ENCODE measurements at regions of chr15 and their contacts with region 1.

Region 1: DNA sequence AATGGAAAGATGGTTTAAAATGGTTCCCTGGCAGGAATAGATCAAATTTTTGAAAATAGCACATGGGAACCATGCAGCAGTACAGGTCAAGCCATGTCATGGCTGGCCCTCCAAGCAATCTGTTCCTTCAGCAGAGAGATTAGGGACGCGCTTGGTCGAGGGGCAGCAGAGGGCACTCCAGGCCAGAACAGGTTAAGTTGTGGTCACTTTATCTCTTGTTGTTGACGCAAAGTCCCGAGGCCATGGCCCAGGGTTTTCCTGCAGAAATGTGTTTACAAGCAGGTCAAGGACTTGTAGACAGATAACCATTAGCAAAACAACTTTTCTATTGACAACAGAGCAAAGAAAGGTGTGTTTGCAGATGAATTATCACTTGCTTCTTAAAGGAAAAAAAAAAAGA is 570.0 kb upstream of the NR2F2 start:
- DNase-seq: peak in 1 of 2 experiments; percentile 9
- H3K4me3 ChIP-seq: no peak overlapping the region
- H3K27ac ChIP-seq: no peak overlapping the region
- H3K4me1 ChIP-seq: no peaks in the 10 kb centered on the region
- H3K27me3 ChIP-seq: no peaks in the 10 kb centered on the region
- CTCF ChIP-seq: no peak

Region 2: DNA sequence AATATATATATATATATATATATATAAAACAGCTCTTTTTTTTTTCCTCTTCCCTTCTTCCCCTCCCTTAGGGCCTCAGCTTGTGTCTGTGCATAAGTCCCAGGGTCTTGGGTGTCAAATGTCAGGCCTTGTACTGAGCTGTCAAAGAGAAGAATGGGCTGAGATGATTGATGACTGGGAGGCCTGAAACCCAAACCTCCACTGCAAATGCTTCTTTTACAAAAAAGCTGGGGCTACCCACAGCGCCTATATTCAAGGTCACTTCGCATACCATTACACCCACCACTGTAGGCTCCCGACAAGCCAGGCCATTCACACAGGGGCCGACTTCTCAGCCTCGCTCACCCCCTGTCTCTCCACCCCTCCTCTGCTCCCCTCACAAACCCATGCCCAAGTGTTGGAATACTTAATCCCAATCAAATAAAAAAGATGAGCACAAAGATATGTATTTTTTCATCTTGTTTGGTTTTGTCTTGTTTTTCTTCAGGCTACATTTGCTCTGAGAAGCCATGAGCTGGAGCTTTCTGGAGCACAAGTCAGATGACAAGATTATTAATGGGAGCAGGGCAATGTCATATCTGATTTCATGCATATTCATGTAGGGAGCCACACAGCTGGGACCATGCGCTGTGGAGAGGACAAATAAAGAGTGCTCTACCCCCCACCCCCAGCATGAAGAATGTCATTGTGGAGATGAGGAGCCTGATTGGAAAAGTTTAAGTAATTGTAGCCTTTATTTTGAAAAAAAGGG is 44.4 kb before region 1 on chr15:
- CTCF ChIA-PET with region 1: no interaction called
- POLR2A ChIA-PET with region 1: no interaction called
- intact Hi-C with region 1: loop called (anchors 10 kb)
- DNase-seq: peak in 1 of 2 experiments; percentile 9
- H3K4me3 ChIP-seq: no peak overlapping the region
- H3K27ac ChIP-seq: no peak overlapping the region
- H3K4me1 ChIP-seq: no peaks in the 10 kb centered on the region
- H3K27me3 ChIP-seq: no peaks in the 10 kb centered on the region
- CTCF ChIP-seq: no peak

Region 3: DNA sequence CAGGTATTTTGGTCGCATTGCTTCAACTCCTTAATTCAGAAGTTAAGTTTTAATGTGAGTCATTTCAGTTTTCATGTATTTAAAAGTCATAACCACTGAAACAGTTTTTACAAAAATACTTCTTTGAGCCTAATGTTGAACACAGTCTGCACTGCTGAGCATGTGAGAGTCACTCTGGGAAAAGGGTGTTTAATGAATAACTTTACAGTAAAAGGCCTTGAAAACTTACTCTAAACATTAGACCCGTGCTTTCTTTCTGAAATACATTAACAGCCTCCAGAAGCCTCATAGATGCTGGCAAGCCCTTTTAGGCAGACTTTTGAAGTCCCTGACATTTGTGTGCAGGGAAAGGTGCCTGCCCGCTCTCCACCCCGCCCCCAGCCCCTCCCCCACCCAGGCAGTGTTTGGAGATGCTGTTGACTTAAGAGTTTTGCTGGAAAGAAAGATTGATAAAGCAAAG is 501.1 kb after region 1 on chr15:
- CTCF ChIA-PET with region 1: no interaction called
- POLR2A ChIA-PET with region 1: no interaction called
- intact Hi-C with region 1: no loop called
- DNase-seq: no peak
- H3K4me3 ChIP-seq: no peak overlapping the region
- H3K27ac ChIP-seq: no peak overlapping the region
- H3K4me1 ChIP-seq: peaks cover 33% of the 10 kb centered on the region
- H3K27me3 ChIP-seq: no peaks in the 10 kb centered on the region
- CTCF ChIP-seq: no peak